HEK293T (cell line): ENCODE measurements at regions of chr16 and their contacts with region 1.

Region 1: GRCh38 chr16:30378236-30379204 is 3.8 kb downstream of the SEPTIN1 start:
- DNase-seq: peak; percentile 100

Region 2: GRCh38 chr16:30335598-30336474 is 42.7 kb before region 1 on chr16:
- CTCF ChIA-PET with region 1: no interaction called
- POLR2A ChIA-PET with region 1: no interaction called
- DNase-seq: no peak

Region 3: DNA sequence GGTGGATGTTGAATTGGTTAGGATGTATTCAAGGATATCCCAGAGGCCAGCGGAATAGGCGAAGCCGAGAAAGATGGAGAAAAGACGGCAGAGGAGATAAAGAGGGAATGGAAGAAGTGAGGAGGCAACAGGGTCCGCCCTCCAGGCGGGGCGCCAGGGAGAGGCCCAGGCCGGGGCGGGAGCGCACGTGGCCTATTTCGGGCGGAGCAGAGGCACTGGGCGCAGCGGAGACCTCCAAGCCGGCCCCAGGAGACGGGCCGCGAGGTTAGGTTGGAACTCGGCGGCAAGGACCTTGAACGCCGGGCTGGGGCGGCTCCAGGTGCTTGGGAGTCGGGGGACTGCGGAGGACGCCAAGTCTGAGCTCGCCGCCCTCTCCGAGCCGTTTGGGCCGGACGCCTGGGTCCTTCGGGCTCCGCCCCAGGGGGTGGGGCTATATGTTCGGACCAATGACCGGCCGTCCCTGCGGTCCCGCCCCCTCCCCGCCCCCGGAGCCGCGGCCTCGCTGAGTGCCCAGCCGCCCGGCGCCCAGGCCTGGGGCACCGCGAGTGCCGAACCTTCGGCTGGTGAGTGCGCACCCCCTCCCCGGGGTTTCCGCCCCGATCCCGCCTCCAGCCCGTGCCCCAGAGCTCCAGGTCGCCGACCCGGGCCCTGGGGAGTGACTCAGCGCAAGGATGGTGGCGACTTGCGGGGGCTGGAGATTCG is 28.7 kb after region 1 on chr16 and contains the start of gene ZNF771:
- CTCF ChIA-PET with region 1: interaction called, 6 read pairs
- POLR2A ChIA-PET with region 1: interaction called, 22 read pairs
- DNase-seq: peak; percentile 94